CD4-positive, alpha-beta memory T cell (primary cell): ENCODE measurements at regions of chr2 and their contacts with region 1.

Region 1: GRCh38 chr2:101205521-101205998 is 47.1 kb upstream of the CNOT11 start:
- DNase-seq: peak in 4 of 5 donors; percentile 37 to 57 (median 56)
- H3K4me3 ChIP-seq: no peak overlapping the region
- H3K4me3 Mint-ChIP-seq: peak overlapping the region; percentile 55 to 87 (median 72)
- H3K27ac ChIP-seq: no peak overlapping the region
- H3K27ac Mint-ChIP-seq: peak overlapping the region; percentile 68 to 90 (median 83)
- H3K4me1 ChIP-seq: peaks cover 4% of the 10 kb centered on the region
- H3K4me1 Mint-ChIP-seq: peaks cover 2 to 14% (median 12%) of the 10 kb centered on the region in 4 donors
- H3K27me3 ChIP-seq: no peaks in the 10 kb centered on the region
- H3K27me3 Mint-ChIP-seq: no peaks in the 10 kb centered on the region

Region 2: GRCh38 chr2:101001691-101002561 is 203.6 kb before region 1 on chr2 and contains the start of gene RPL31:
- CTCF ChIA-PET with region 1: interaction called, 13 read pairs
- POLR2A ChIA-PET with region 1: no interaction called
- intact Hi-C with region 1: no loop called
- DNase-seq: peak; percentile 93 to 98 (median 96)
- H3K4me3 ChIP-seq: peak within 1 kb of the TSS; percentile 97 to 98
- H3K4me3 Mint-ChIP-seq: peak within 1 kb of the TSS; percentile 90 to 96 (median 95)
- H3K27ac ChIP-seq: peak within 1 kb of the TSS; percentile 91
- H3K27ac Mint-ChIP-seq: peak within 1 kb of the TSS; percentile 91 to 99 (median 98)
- H3K4me1 ChIP-seq: peaks cover 37% of the 10 kb centered on the region
- H3K4me1 Mint-ChIP-seq: peaks cover 32 to 51% (median 45%) of the 10 kb centered on the region in 4 donors
- H3K27me3 ChIP-seq: no peaks in the 10 kb centered on the region
- H3K27me3 Mint-ChIP-seq: no peaks in the 10 kb centered on the region
- total RNA-seq, gene RPL31: 2,455 to 2,531 TPM

Region 3: GRCh38 chr2:101012706-101013181 is 192.8 kb before region 1 on chr2:
- CTCF ChIA-PET with region 1: interaction called, 58 read pairs
- POLR2A ChIA-PET with region 1: interaction called, 10 read pairs
- intact Hi-C with region 1: loop called (anchors 1 kb)
- DNase-seq: peak in 4 of 5 donors; percentile 24 to 51 (median 37)
- H3K4me3 ChIP-seq: no peak overlapping the region
- H3K4me3 Mint-ChIP-seq: no peak overlapping the region
- H3K27ac ChIP-seq: no peak overlapping the region
- H3K27ac Mint-ChIP-seq: peak overlapping the region in 2 of 7 donors; percentile 30 to 55
- H3K4me1 ChIP-seq: no peaks in the 10 kb centered on the region
- H3K4me1 Mint-ChIP-seq: peaks cover 8 to 18% (median 12%) of the 10 kb centered on the region in 4 donors
- H3K27me3 ChIP-seq: no peaks in the 10 kb centered on the region
- H3K27me3 Mint-ChIP-seq: no peaks in the 10 kb centered on the region

Region 4: GRCh38 chr2:101036562-101037457 is 168.8 kb before region 1 on chr2:
- CTCF ChIA-PET with region 1: interaction called, 8 read pairs
- POLR2A ChIA-PET with region 1: no interaction called
- intact Hi-C with region 1: loop called (anchors 1 kb)
- DNase-seq: no peak
- H3K4me3 ChIP-seq: no peak overlapping the region
- H3K4me3 Mint-ChIP-seq: no peak overlapping the region
- H3K27ac ChIP-seq: no peak overlapping the region
- H3K27ac Mint-ChIP-seq: no peak overlapping the region
- H3K4me1 ChIP-seq: no peaks in the 10 kb centered on the region
- H3K4me1 Mint-ChIP-seq: no peaks in the 10 kb centered on the region
- H3K27me3 ChIP-seq: no peaks in the 10 kb centered on the region
- H3K27me3 Mint-ChIP-seq: peaks cover 3 to 7% of the 10 kb centered on the region in 2 donors

Region 5: GRCh38 chr2:101223814-101224231 is 18.3 kb after region 1 on chr2:
- CTCF ChIA-PET with region 1: interaction called, 26 read pairs
- POLR2A ChIA-PET with region 1: interaction called, 4 read pairs
- intact Hi-C with region 1: no loop called
- DNase-seq: peak; percentile 60 to 72 (median 66)
- H3K4me3 ChIP-seq: no peak overlapping the region
- H3K4me3 Mint-ChIP-seq: peak overlapping the region; percentile 42 to 78 (median 58)
- H3K27ac ChIP-seq: no peak overlapping the region
- H3K27ac Mint-ChIP-seq: peak overlapping the region; percentile 43 to 91 (median 67)
- H3K4me1 ChIP-seq: peaks cover 14% of the 10 kb centered on the region
- H3K4me1 Mint-ChIP-seq: peaks cover 13 to 16% (median 13%) of the 10 kb centered on the region in 4 donors
- H3K27me3 ChIP-seq: no peaks in the 10 kb centered on the region
- H3K27me3 Mint-ChIP-seq: no peaks in the 10 kb centered on the region